K562 (cell line): ENCODE measurements at regions of chr4 and their contacts with region 1.

Region 1: DNA sequence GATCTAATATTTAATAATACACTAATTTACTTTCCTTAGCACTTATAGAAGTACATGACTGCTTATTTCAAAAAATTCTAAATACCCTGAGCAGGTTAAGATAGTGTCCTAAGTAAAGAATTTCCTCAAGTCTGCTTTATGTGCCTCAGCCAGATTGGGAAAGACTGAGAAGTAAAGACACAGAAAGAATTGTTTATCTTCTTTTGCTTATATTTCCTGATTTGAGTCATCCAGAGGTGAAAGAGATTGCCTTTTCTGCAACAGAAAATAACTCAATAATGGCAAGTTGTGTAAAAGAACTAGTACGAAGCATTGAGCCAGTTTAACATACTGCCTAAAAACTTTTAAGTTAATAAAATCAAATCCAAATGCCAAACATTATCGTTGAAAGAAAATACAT is 45.0 kb downstream of the NAF1 start:
- DNase-seq: no peak
- ATAC-seq: no peak
- H3K4me3 ChIP-seq: no peak overlapping the region
- H3K27ac ChIP-seq: no peak overlapping the region
- H3K4me1 ChIP-seq: no peaks in the 10 kb centered on the region
- H3K27me3 ChIP-seq: no peaks in the 10 kb centered on the region
- CTCF ChIP-seq: no peak
- EP300 ChIP-seq: no peak
- POLR2A ChIP-seq: no peak
- RAD21 ChIP-seq: no peak

Region 2: DNA sequence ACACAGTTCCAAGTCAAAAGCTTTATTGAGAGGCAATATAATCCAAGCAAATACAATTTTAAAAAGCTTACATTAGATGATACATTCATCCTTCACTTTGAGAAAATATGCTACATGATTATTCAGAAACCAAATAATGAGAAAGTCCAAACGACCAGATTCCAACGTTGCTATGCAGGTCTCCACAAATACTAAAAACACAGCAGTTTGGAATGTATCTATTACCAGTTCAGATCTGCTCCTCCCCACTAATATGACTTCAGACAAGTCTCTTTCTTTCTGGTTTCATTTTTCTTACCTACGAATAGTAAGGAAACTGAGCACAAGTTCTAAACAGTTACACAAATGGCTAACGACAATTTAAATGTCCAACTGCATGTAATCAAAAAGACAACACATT is 35.5 kb after region 1 on chr4:
- CTCF ChIA-PET with region 1: no interaction called
- POLR2A ChIA-PET with region 1: no interaction called
- in situ Hi-C with region 1: loop called (anchors 5 kb)
- intact Hi-C with region 1: no loop called
- DNase-seq: no peak
- ATAC-seq: no peak
- H3K4me3 ChIP-seq: no peak overlapping the region
- H3K27ac ChIP-seq: no peak overlapping the region
- H3K4me1 ChIP-seq: peaks cover 2 to 5% of the 10 kb centered on the region in 2 experiments; a peak in 2 of 5 replicates
- H3K27me3 ChIP-seq: no peaks in the 10 kb centered on the region
- CTCF ChIP-seq: no peak
- EP300 ChIP-seq: no peak
- POLR2A ChIP-seq: no peak
- RAD21 ChIP-seq: no peak

Region 3: GRCh38 chr4:163171590-163171989 is 49.9 kb after region 1 on chr4:
- CTCF ChIA-PET with region 1: no interaction called
- POLR2A ChIA-PET with region 1: no interaction called
- in situ Hi-C with region 1: no loop called
- intact Hi-C with region 1: no loop called
- DNase-seq: no peak
- ATAC-seq: no peak
- H3K4me3 ChIP-seq: no peak overlapping the region
- H3K27ac ChIP-seq: no peak overlapping the region
- H3K4me1 ChIP-seq: peaks cover 2 to 3% of the 10 kb centered on the region in 2 experiments; a peak in 3 of 5 replicates
- H3K27me3 ChIP-seq: peaks cover 10 to 28% of the 10 kb centered on the region in 2 experiments; a peak in 4 of 5 replicates
- CTCF ChIP-seq: no peak
- EP300 ChIP-seq: no peak
- POLR2A ChIP-seq: no peak
- RAD21 ChIP-seq: no peak